Calu3 (cell line): ENCODE measurements at regions of chrX and their contacts with region 1.

Region 1: DNA sequence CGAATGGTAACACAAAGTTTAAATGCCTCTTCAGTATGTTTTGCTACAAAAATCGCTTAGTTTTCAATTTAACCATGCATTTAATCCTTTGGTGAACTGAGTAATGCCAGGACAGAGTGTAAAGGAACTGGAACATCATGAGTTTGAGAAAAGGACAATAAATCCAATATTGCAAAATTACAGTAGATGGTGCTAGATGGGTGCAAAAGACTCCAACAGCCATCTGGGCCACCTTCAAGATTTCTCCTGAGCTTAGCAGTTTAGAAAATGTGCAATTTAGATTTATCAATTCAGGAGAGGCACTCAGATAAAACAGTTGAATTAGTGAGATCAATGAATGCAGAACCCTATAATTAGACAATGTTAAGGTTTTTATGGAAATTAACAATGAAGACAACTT is 33.2 kb upstream of the MID1IP1 start:
- DNase-seq: no peak
- H3K4me3 Mint-ChIP-seq: no peak overlapping the region
- H3K27ac Mint-ChIP-seq: no peak overlapping the region
- H3K4me1 Mint-ChIP-seq: no peaks in the 10 kb centered on the region
- H3K27me3 Mint-ChIP-seq: no peaks in the 10 kb centered on the region
- CTCF ChIP-seq: no peak

Region 2: GRCh38 chrX:38636949-38637819 is 130.9 kb before region 1 on chrX:
- CTCF ChIA-PET with region 1: no interaction called
- intact Hi-C with region 1: no loop called
- DNase-seq: no peak
- H3K4me3 Mint-ChIP-seq: no peak overlapping the region
- H3K27ac Mint-ChIP-seq: no peak overlapping the region
- H3K4me1 Mint-ChIP-seq: no peaks in the 10 kb centered on the region
- H3K27me3 Mint-ChIP-seq: peaks cover 14% of the 10 kb centered on the region
- CTCF ChIP-seq: no peak

Region 3: GRCh38 chrX:38651625-38652601 is 116.2 kb before region 1 on chrX:
- CTCF ChIA-PET with region 1: no interaction called
- intact Hi-C with region 1: no loop called
- DNase-seq: no peak
- H3K4me3 Mint-ChIP-seq: no peak overlapping the region
- H3K27ac Mint-ChIP-seq: no peak overlapping the region
- H3K4me1 Mint-ChIP-seq: no peaks in the 10 kb centered on the region
- H3K27me3 Mint-ChIP-seq: no peaks in the 10 kb centered on the region
- CTCF ChIP-seq: no peak

Region 4: GRCh38 chrX:39012621-39013111 is 244.6 kb after region 1 on chrX:
- CTCF ChIA-PET with region 1: interaction called, 12 read pairs
- intact Hi-C with region 1: loop called (anchors 1 kb)
- DNase-seq: no peak
- H3K4me3 Mint-ChIP-seq: no peak overlapping the region
- H3K27ac Mint-ChIP-seq: no peak overlapping the region
- H3K4me1 Mint-ChIP-seq: peaks cover 69% of the 10 kb centered on the region
- H3K27me3 Mint-ChIP-seq: no peaks in the 10 kb centered on the region
- CTCF ChIP-seq: no peak

Region 5: GRCh38 chrX:39149761-39150160 is 381.7 kb after region 1 on chrX:
- CTCF ChIA-PET with region 1: interaction called, 5 read pairs
- intact Hi-C with region 1: loop called (anchors 2 kb)
- DNase-seq: peak; percentile 60
- H3K4me3 Mint-ChIP-seq: no peak overlapping the region
- H3K27ac Mint-ChIP-seq: no peak overlapping the region
- H3K4me1 Mint-ChIP-seq: peaks cover 13% of the 10 kb centered on the region
- H3K27me3 Mint-ChIP-seq: peaks cover 27% of the 10 kb centered on the region
- CTCF ChIP-seq: peak; percentile 47